ENCODE measurements at regions of chr12 and their contacts with region 1.

Region 1: DNA sequence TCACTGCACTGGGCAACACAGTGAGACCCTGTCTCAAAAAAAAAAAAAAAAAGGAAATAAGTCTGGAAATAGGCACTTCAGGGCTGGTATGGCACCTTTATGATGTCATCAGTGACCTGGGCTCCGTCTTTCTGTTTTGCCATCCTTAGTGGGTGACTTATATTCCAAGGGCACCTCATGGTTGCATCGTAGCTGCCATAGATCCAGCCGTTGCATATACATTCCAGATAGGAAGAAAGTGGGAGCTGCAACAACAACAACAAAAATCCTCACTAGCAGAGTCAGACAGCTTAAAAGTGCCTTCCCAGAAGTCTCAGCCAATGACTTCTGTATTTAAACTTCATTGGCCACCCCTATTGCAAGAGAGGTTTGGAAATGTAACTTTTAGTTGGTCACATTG is 26.4 kb downstream of the MYL2 start:
- DNase-seq: no peak
- ATAC-seq: no peak
- H3K4me3 ChIP-seq: peak overlapping the region in 1 of 2 experiments; percentile 19
- H3K4me3 Mint-ChIP-seq: no peak overlapping the region
- H3K27ac ChIP-seq: no peak overlapping the region
- H3K27ac Mint-ChIP-seq: no peak overlapping the region
- H3K4me1 ChIP-seq: no peaks in the 10 kb centered on the region
- H3K4me1 Mint-ChIP-seq: peaks cover 9% of the 10 kb centered on the region
- H3K27me3 ChIP-seq: peaks cover 0 to 4% of the 10 kb centered on the region in 2 experiments
- H3K27me3 Mint-ChIP-seq: peaks cover 6% of the 10 kb centered on the region
- CTCF ChIP-seq: no peak

Region 2: GRCh38 chr12:110853836-110854235 is 40.1 kb before region 1 on chr12:
- CTCF ChIA-PET with region 1: no interaction called
- POLR2A ChIA-PET with region 1: no interaction called
- intact Hi-C with region 1: no loop called
- DNase-seq: no peak
- ATAC-seq: no peak
- H3K4me3 ChIP-seq: no peak overlapping the region
- H3K4me3 Mint-ChIP-seq: peak overlapping the region; percentile 5
- H3K27ac ChIP-seq: no peak overlapping the region
- H3K27ac Mint-ChIP-seq: no peak overlapping the region
- H3K4me1 ChIP-seq: no peaks in the 10 kb centered on the region
- H3K4me1 Mint-ChIP-seq: no peaks in the 10 kb centered on the region
- H3K27me3 ChIP-seq: peaks cover 0 to under 1% of the 10 kb centered on the region in 2 experiments
- H3K27me3 Mint-ChIP-seq: peaks cover 23% of the 10 kb centered on the region
- CTCF ChIP-seq: no peak

Region 3: GRCh38 chr12:110880648-110881047 is 13.3 kb before region 1 on chr12:
- CTCF ChIA-PET with region 1: interaction called, 13 read pairs
- POLR2A ChIA-PET with region 1: no interaction called
- intact Hi-C with region 1: no loop called
- DNase-seq: no peak
- ATAC-seq: no peak
- H3K4me3 ChIP-seq: no peak overlapping the region
- H3K4me3 Mint-ChIP-seq: no peak overlapping the region
- H3K27ac ChIP-seq: no peak overlapping the region
- H3K27ac Mint-ChIP-seq: no peak overlapping the region
- H3K4me1 ChIP-seq: no peaks in the 10 kb centered on the region
- H3K4me1 Mint-ChIP-seq: no peaks in the 10 kb centered on the region
- H3K27me3 ChIP-seq: no peaks in the 10 kb centered on the region
- H3K27me3 Mint-ChIP-seq: peaks cover 8% of the 10 kb centered on the region
- CTCF ChIP-seq: no peak

Region 4: GRCh38 chr12:111274777-111275176 is 380.8 kb after region 1 on chr12:
- CTCF ChIA-PET with region 1: interaction called, 10 read pairs
- POLR2A ChIA-PET with region 1: no interaction called
- intact Hi-C with region 1: no loop called
- DNase-seq: no peak
- ATAC-seq: no peak
- H3K4me3 ChIP-seq: no peak overlapping the region
- H3K4me3 Mint-ChIP-seq: no peak overlapping the region
- H3K27ac ChIP-seq: no peak overlapping the region
- H3K27ac Mint-ChIP-seq: no peak overlapping the region
- H3K4me1 ChIP-seq: no peaks in the 10 kb centered on the region
- H3K4me1 Mint-ChIP-seq: peaks cover 2% of the 10 kb centered on the region
- H3K27me3 ChIP-seq: no peaks in the 10 kb centered on the region
- H3K27me3 Mint-ChIP-seq: peaks cover 20% of the 10 kb centered on the region
- CTCF ChIP-seq: no peak

Region 5: GRCh38 chr12:111298582-111299436 is 404.9 kb after region 1 on chr12:
- CTCF ChIA-PET with region 1: interaction called, 6 read pairs
- POLR2A ChIA-PET with region 1: no interaction called
- intact Hi-C with region 1: loop called in 1 of 2 experiments (anchors 5 kb)
- DNase-seq: peak in 8 of 9 experiments; percentile 26 to 65 (median 46)
- ATAC-seq: peak; percentile 34
- H3K4me3 ChIP-seq: no peak overlapping the region
- H3K4me3 Mint-ChIP-seq: no peak overlapping the region
- H3K27ac ChIP-seq: no peak overlapping the region
- H3K27ac Mint-ChIP-seq: no peak overlapping the region
- H3K4me1 ChIP-seq: no peaks in the 10 kb centered on the region
- H3K4me1 Mint-ChIP-seq: no peaks in the 10 kb centered on the region
- H3K27me3 ChIP-seq: no peaks in the 10 kb centered on the region
- H3K27me3 Mint-ChIP-seq: peaks cover 6% of the 10 kb centered on the region
- CTCF ChIP-seq: peak; percentile 48

Region 6: GRCh38 chr12:111313833-111314259 is 419.9 kb after region 1 on chr12:
- CTCF ChIA-PET with region 1: interaction called, 6 read pairs
- POLR2A ChIA-PET with region 1: no interaction called
- intact Hi-C with region 1: loop called in 1 of 2 experiments (anchors 1 kb)
- DNase-seq: peak; percentile 36 to 85 (median 72)
- ATAC-seq: peak; percentile 52
- H3K4me3 ChIP-seq: no peak overlapping the region
- H3K4me3 Mint-ChIP-seq: no peak overlapping the region
- H3K27ac ChIP-seq: no peak overlapping the region
- H3K27ac Mint-ChIP-seq: no peak overlapping the region
- H3K4me1 ChIP-seq: peaks cover 12% of the 10 kb centered on the region
- H3K4me1 Mint-ChIP-seq: peaks cover 10% of the 10 kb centered on the region
- H3K27me3 ChIP-seq: peaks cover 3% of the 10 kb centered on the region in 2 experiments
- H3K27me3 Mint-ChIP-seq: peaks cover 19% of the 10 kb centered on the region
- CTCF ChIP-seq: peak; percentile 95

Measured in CD8-positive, alpha-beta T cell (primary cell).